Posterior vena cava (tissue), 2 donors: ENCODE measurements at regions of chr1 and their contacts with region 1.

Region 1: DNA sequence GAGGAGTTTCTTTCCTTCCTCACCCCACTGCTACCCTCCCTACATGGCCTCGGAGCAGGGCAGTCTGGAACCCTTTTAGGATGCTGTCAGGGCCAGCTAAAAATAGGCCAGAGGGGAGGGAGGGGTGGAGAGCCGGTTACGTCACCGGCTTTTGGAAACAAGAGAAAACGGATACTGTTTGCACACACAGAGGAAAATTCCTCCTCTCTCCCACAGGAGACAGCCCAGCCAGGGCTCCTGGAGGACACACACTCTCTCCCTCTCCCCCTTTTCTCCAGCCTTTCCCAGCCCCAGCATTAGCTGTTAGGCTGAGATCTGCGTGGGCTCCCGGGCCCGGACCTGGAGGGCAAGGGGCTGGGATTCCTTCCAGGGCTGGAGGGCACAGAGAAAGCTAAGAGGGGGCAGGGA is 20.0 kb upstream of the ALDH4A1 start:
- DNase-seq: peak; percentile 93

Region 2: GRCh38 chr1:18941221-18942141 is 19.2 kb after region 1 on chr1:
- intact Hi-C with region 1: loop called in 1 of 2 experiments (anchors 1 kb)
- DNase-seq: no peak

Region 3: GRCh38 chr1:18949686-18950400 is 27.5 kb after region 1 on chr1:
- intact Hi-C with region 1: loop called (anchors 5 kb)
- DNase-seq: no peak

Region 4: DNA sequence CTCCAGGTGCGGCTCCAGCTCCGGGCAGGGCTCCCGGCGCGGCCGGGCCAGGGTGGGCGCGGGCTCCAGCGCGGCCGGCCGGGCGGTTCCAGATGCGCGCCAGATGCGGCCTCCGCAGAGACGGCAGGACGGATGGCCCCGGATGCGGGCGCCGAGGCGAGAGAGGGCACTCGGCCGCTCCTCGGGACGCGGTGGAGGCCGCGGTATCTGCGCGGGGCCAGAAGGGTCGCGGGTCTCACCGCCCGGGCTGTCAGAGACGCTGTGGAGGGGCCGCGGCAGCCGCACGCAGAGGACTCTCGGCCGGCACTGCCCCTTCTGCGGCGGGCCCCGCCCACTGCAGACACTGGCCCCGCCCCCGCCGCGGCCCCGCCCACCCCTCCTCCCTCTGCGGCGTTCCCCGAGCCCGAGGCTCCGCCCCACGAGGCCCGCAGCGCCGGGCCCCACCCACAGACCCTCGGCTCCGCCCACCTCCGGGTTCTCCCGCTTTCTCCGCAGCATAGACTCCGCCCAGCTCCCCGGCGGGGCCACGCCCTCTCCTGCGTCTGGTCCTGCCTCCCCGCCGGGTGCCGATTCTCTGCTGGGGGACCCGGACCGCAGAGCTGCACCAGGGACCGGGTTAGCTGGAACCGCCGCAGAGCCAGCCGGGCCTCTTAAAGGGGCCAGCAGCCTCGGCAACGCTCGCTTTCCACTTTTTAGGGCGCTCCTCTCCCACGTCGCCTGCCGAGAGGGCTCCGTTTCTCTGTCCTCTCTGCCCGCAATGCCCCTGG is 34.2 kb after region 1 on chr1 and contains the start of gene IFFO2:
- intact Hi-C with region 1: loop called (anchors 5 kb)
- DNase-seq: peak; percentile 99
- total RNA-seq, gene IFFO2: 12.1 to 12.2 TPM

Region 5: DNA sequence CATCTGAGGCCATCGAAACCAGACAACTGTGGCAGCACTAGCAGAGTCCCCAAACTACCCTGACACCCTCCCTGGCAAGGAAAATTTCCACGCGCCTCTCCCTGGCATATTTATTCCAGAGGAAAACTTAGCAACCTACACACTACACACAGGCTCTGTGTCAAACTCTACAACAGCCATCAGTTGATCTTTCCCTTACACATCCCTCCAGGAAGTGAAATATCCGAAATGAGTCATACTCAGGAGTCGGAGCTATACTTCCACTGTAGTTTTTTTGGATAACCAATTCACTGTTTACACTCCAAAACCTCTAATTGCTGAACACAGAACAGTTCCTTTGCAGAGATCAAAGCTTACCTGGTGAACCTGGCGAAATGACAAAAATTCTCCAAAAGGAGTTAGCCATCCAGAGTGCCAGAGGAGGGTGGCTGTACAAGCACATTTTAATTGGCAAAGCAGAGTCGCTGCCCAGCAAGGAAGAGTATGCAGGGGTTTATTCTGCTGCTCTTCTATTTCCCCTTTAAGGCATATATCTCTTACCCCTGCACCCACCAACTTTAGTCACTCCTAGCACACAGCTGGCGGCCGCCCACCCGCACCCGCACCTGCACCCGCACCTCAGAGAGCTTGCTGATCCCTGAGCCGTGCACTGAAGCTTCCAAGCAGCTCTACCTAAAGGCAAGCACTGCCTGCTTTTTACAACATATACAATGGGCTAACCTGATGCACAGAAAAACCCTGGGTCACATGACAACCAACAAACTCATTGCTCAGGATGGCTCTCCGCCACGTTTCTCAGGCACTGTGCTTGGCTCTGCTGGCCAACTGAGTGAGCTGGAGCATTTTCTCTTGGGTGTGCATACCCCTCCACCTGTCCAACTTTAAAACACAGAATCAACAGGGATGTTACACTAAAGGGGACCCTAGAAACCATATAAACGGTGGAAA is 508.1 kb after region 1 on chr1:
- intact Hi-C with region 1: no loop called
- DNase-seq: peak; percentile 43

Region 6: GRCh38 chr1:20279509-20279908 is 1357.2 kb after region 1 on chr1:
- intact Hi-C with region 1: no loop called
- DNase-seq: no peak